GM12878 (cell line): ENCODE measurements at regions of chr4 and their contacts with region 1.

Region 1: GRCh38 chr4:12926189-12927066 is 557.7 kb downstream of the RAB28 start:
- DNase-seq: peak; percentile 11
- ATAC-seq: peak; percentile 97
- H3K4me3 ChIP-seq: no peak overlapping the region
- H3K27ac ChIP-seq: no peak overlapping the region
- H3K4me1 ChIP-seq: no peaks in the 10 kb centered on the region
- H3K27me3 ChIP-seq: no peaks in the 10 kb centered on the region
- CTCF ChIP-seq: no peak
- EP300 ChIP-seq: 0 out of 4 replicates have a peak, but pooled peaks of 1 of the 2 experiments have one; percentile 37
- POLR2A ChIP-seq: no peak
- RAD21 ChIP-seq: no peak

Region 2: DNA sequence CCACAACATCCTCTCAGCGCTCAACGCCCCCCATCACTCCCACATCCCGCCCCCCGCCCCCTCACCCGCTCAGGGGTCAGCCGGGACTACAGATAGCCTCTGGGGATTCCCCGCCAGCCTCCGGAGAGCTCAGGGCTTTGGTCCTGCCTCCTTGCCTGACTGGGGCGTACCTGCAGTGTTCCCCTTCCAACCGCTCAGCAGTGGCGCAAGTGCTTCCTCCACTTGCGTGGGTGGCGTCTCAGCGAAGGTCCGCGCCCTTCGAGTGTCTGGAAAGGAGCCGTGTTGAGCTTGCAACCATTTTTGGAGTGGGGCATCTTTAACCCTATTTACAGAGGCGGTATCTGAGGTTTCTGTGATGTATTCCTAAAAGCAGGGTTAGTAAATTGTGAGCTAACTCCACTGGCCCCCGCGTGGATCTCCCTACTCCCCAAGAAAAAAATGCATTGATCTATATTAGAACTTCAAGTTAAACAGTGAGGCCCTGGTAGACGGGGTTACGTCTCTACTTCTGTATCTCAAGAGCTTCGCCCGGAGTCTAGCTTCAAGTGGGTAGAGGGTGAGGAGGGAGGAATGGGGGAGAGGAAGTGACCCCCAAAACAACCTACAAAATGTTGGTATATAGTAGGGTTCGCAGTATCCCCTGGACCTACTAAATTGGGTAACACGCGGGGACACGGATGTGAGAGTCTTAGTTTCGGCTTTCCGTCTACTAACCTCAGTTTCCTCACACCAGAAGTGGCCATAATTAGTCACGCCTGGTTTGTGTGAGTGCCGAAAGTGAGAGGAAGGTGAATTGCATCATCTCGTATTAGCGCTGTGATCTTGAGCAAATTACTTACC is 601.8 kb after region 1 on chr4:
- CTCF ChIA-PET with region 1: no interaction called
- POLR2A ChIA-PET with region 1: no interaction called
- RAD21 ChIA-PET with region 1: no interaction called
- SMC1A ChIA-PET with region 1: no interaction called
- in situ Hi-C with region 1: no loop called
- intact Hi-C with region 1: loop called (anchors 5 kb)
- DNase-seq: peak; percentile 56
- ATAC-seq: peak; percentile 87
- H3K4me3 ChIP-seq: peak overlapping the region; percentile 53; the same call in 1 of the 2 replicates
- H3K27ac ChIP-seq: no peak overlapping the region
- H3K4me1 ChIP-seq: peaks cover 14% of the 10 kb centered on the region
- H3K27me3 ChIP-seq: peaks cover 5 to 7% of the 10 kb centered on the region in 2 experiments
- CTCF ChIP-seq: no peak
- EP300 ChIP-seq: no peak
- POLR2A ChIP-seq: no peak
- RAD21 ChIP-seq: no peak